GM12878 (cell line): ENCODE measurements at regions of chr15 and their contacts with region 1.

Region 1: DNA sequence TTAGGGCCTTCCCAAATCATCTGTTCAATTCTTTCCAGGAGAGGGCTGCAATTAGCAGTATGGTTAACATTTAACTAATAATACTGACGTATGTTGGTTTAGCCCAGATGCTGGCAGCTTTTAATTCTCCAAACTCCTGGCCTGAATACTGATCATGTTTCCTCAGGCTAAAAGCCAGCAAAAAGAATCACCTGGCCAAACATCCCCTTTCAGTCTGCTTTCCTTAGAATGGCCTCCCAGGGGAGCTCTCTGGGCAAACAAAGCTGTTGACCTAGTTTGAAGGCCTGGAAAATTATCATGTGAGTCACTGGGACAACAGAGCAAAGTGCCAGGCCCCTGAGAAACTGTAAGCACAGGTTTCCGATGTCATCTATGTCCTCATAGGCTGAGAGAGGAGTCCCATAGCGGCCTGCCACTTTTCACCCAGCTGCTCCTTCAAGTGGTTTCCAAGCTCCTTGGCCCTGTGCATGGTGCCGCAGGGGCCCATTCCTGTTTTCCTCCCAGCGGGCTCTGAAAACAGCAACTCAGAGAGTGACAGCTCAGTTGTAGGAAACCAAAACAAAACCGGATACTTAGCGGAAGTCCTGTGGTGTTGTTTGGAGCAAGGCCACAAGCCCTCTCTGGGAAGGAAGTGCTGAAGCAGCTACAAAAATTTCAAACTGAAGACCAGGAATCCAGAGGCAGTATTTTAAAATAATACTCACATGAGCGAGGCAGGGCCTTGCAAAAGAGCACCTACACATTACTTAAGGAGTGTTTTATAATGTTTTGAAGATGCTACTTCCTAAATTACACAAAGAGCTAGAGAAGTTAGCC is 36.5 kb upstream of the RAB11A start:
- DNase-seq: no peak
- ATAC-seq: peak; percentile 56
- H3K4me3 ChIP-seq: peak overlapping the region; percentile 45; the same call in 1 of the 2 replicates
- H3K27ac ChIP-seq: peak overlapping the region; percentile 79
- H3K4me1 ChIP-seq: peaks cover 25% of the 10 kb centered on the region
- H3K27me3 ChIP-seq: no peaks in the 10 kb centered on the region
- CTCF ChIP-seq: no peak
- EP300 ChIP-seq: no peak
- POLR2A ChIP-seq: peak; percentile 36; the same call in 1 of the 2 replicates
- RAD21 ChIP-seq: no peak

Region 2: GRCh38 chr15:65630760-65631159 is 202.0 kb before region 1 on chr15:
- CTCF ChIA-PET with region 1: interaction called, 192 read pairs
- POLR2A ChIA-PET with region 1: interaction called, 4 read pairs
- RAD21 ChIA-PET with region 1: interaction called, 69 read pairs
- SMC1A ChIA-PET with region 1: interaction called, 11 read pairs
- in situ Hi-C with region 1: no loop called
- intact Hi-C with region 1: loop called (anchors 5 kb)
- DNase-seq: no peak
- ATAC-seq: peak; percentile 89
- H3K4me3 ChIP-seq: peak overlapping the region; percentile 9; the same call in 1 of the 2 replicates
- H3K27ac ChIP-seq: no peak overlapping the region
- H3K4me1 ChIP-seq: peaks cover 16% of the 10 kb centered on the region
- H3K27me3 ChIP-seq: no peaks in the 10 kb centered on the region
- CTCF ChIP-seq: no peak
- EP300 ChIP-seq: 0 out of 4 replicates have a peak, but pooled peaks have one; percentile 16 to 32
- POLR2A ChIP-seq: no peak
- RAD21 ChIP-seq: no peak

Region 3: GRCh38 chr15:65651831-65652749 is 180.7 kb before region 1 on chr15:
- CTCF ChIA-PET with region 1: interaction called, 8 read pairs
- POLR2A ChIA-PET with region 1: no interaction called
- RAD21 ChIA-PET with region 1: interaction called, 5 read pairs
- SMC1A ChIA-PET with region 1: interaction called, 15 read pairs
- in situ Hi-C with region 1: no loop called
- intact Hi-C with region 1: no loop called
- DNase-seq: no peak
- ATAC-seq: no peak
- H3K4me3 ChIP-seq: no peak overlapping the region
- H3K27ac ChIP-seq: no peak overlapping the region
- H3K4me1 ChIP-seq: peaks cover 9% of the 10 kb centered on the region
- H3K27me3 ChIP-seq: no peaks in the 10 kb centered on the region
- CTCF ChIP-seq: no peak
- EP300 ChIP-seq: no peak
- POLR2A ChIP-seq: no peak; the same call in 1 of the 2 replicates
- RAD21 ChIP-seq: no peak

Region 4: GRCh38 chr15:65792130-65792987 is 40.4 kb before region 1 on chr15 and contains the start of gene DENND4A:
- CTCF ChIA-PET with region 1: interaction called, 155 read pairs
- POLR2A ChIA-PET with region 1: interaction called, 8 read pairs
- RAD21 ChIA-PET with region 1: interaction called, 11 read pairs
- SMC1A ChIA-PET with region 1: interaction called, 488 read pairs
- in situ Hi-C with region 1: no loop called
- intact Hi-C with region 1: no loop called
- DNase-seq: peak; percentile 97
- ATAC-seq: peak; percentile 79
- H3K4me3 ChIP-seq: peak within 1 kb of the TSS; percentile 96
- H3K27ac ChIP-seq: peak within 1 kb of the TSS; percentile 99
- H3K4me1 ChIP-seq: peaks cover 18% of the 10 kb centered on the region
- H3K27me3 ChIP-seq: no peaks in the 10 kb centered on the region
- CTCF ChIP-seq: no peak
- EP300 ChIP-seq: peak; percentile 90 to 96
- POLR2A ChIP-seq: peak; percentile 92
- RAD21 ChIP-seq: no peak
- polyA plus RNA-seq, gene DENND4A: 14.2 to 15.4 TPM

Region 5: GRCh38 chr15:65862682-65863081 is 29.9 kb after region 1 on chr15:
- CTCF ChIA-PET with region 1: interaction called, 61 read pairs
- POLR2A ChIA-PET with region 1: interaction called, 5 read pairs
- RAD21 ChIA-PET with region 1: interaction called, 15 read pairs
- SMC1A ChIA-PET with region 1: interaction called, 19 read pairs
- in situ Hi-C with region 1: no loop called
- intact Hi-C with region 1: no loop called
- DNase-seq: no peak
- ATAC-seq: peak; percentile 97
- H3K4me3 ChIP-seq: no peak overlapping the region
- H3K27ac ChIP-seq: no peak overlapping the region
- H3K4me1 ChIP-seq: peaks cover 13% of the 10 kb centered on the region
- H3K27me3 ChIP-seq: no peaks in the 10 kb centered on the region
- CTCF ChIP-seq: peak; percentile 38 to 64 (median 54); a peak in 5 of 6 replicates
- EP300 ChIP-seq: no peak
- POLR2A ChIP-seq: no peak
- RAD21 ChIP-seq: peak; percentile 54

Region 6: GRCh38 chr15:65981837-65982626 is 149.3 kb after region 1 on chr15:
- CTCF ChIA-PET with region 1: no interaction called
- POLR2A ChIA-PET with region 1: no interaction called
- RAD21 ChIA-PET with region 1: no interaction called
- SMC1A ChIA-PET with region 1: no interaction called
- in situ Hi-C with region 1: no loop called
- intact Hi-C with region 1: no loop called
- DNase-seq: no peak
- ATAC-seq: peak; percentile 94
- H3K4me3 ChIP-seq: peak overlapping the region; percentile 57; the same call in 1 of the 2 replicates
- H3K27ac ChIP-seq: no peak overlapping the region
- H3K4me1 ChIP-seq: no peaks in the 10 kb centered on the region; the same call in 1 of the 2 replicates
- H3K27me3 ChIP-seq: peaks cover 0 to 1% of the 10 kb centered on the region in 2 experiments; a peak in 1 of 4 replicates
- CTCF ChIP-seq: peak; percentile 38 to 56 (median 51)
- EP300 ChIP-seq: no peak
- POLR2A ChIP-seq: no peak
- RAD21 ChIP-seq: peak; percentile 54